ENCODE measurements at regions of chr1 and their contacts with region 1.

Region 1: DNA sequence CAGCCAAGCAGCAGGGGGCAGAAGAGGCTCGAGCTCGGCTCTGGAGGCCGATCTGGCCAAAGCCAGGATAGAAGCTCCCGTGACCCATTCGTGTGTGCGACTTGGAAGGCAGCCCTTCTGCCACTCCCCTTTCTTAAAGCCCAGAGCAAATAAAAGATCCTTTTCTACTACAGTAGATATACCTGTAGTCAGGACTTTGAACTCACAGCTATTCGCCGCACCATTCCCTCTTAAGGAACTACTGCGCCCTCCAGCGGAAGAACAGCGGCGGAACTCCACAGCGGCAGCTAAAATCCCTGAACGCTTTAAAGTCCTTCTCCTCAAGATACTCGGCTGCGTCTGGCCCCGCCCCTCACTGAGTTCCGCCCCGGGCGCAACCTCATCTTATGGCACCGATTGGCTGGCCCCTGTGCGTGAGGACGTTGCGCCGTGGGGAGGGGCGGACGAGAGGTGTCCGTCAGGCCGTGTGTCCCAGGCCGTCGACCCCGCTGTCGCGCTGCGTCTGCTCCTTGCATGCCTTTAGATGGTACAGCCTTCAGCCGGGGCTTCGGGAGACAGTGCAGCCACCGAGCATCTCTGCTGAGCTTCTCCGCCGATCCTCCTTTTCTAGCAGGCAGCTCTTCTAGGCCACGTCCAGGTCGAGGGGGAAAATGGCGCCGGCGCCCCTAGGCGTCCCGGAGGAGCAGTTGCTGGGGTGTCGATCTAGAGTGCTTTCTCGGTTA is at the start of gene LRIG2:
- DNase-seq: peak; percentile 100
- ATAC-seq: peak; percentile 96
- H3K4me3 Mint-ChIP-seq: peak within 1 kb of the TSS; percentile 98
- H3K27ac Mint-ChIP-seq: peak within 1 kb of the TSS; percentile 97
- H3K4me1 Mint-ChIP-seq: peaks cover 31% of the 10 kb centered on the region
- H3K27me3 Mint-ChIP-seq: no peaks in the 10 kb centered on the region
- CTCF ChIP-seq: peak; percentile 75
- total RNA-seq, gene LRIG2: 22.5 to 23.5 TPM (median 22.9 TPM) in 3 replicates

Region 2: DNA sequence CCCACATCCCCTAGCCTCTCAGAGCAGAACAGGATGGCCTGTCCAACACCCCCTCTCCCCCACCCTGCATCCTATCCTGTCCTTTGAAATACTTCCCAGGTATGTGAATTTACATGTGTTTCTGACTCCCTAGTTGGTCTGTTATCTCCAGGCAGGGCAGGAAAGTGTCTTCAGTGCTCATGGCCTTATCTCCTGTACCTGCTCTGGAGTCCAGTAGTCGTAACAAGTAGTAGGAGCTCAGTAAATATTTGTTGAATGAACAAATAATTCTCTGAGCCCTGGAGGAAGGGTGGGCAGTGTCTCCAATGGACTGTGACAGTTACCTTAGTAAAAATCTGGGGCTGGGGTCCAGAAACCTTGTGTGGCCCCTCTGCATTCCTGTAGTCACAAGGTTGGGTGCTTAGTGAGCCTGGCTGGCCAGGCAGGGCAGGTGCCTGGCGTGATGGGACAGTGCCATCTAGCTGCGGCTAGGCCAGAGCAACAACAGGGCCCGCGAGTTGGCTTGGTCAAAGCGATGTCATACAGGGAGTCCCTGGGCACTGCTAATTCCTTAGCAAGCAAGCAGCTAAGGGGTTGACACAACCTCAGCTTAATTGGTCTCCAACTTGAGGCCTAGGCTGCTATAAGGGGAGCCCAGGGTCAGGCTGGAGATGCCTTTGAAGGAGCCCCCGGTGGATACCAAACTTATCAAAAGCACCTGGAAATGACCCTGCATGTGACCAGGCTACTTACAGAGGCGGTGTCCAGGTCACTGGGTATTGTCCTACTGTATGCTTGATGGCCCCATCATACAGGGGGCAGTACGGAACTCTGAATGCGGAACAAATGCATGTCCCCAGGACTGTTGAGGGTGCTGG is 268.8 kb before region 1 on chr1:
- CTCF ChIA-PET with region 1: interaction called, 44 read pairs
- POLR2A ChIA-PET with region 1: no interaction called
- DNase-seq: peak; percentile 85
- ATAC-seq: peak; percentile 93
- H3K4me3 Mint-ChIP-seq: no peak overlapping the region
- H3K27ac Mint-ChIP-seq: no peak overlapping the region; the same call in 1 of the 2 replicates
- H3K4me1 Mint-ChIP-seq: peaks cover 49% of the 10 kb centered on the region
- H3K27me3 Mint-ChIP-seq: peaks cover 29% of the 10 kb centered on the region
- CTCF ChIP-seq: peak; percentile 50

Region 3: GRCh38 chr1:112882271-112882744 is 190.6 kb before region 1 on chr1:
- CTCF ChIA-PET with region 1: interaction called, 63 read pairs
- POLR2A ChIA-PET with region 1: interaction called, 4 read pairs
- DNase-seq: no peak
- ATAC-seq: no peak
- H3K4me3 Mint-ChIP-seq: no peak overlapping the region
- H3K27ac Mint-ChIP-seq: no peak overlapping the region
- H3K4me1 Mint-ChIP-seq: peaks cover 53% of the 10 kb centered on the region
- H3K27me3 Mint-ChIP-seq: no peaks in the 10 kb centered on the region
- CTCF ChIP-seq: no peak

Region 4: DNA sequence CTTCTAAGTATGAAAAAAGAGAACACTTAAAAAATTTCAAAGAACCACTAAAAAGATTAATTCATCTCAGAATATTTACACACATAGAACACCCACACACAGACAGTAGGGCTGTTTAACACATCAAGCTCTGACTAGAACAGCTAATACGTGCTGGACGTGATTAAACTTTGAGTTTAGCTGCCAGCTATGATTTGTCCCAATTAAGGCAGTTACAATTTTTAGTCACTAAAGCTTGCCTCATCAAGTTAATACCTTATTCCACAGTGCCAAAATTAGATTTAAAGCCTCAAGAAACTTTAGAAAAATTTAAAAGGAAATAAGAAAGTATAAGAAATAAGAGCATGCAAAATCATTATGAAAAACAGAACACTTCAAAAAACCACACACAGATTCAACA is 135.8 kb before region 1 on chr1:
- CTCF ChIA-PET with region 1: interaction called, 10 read pairs
- POLR2A ChIA-PET with region 1: no interaction called
- DNase-seq: no peak
- ATAC-seq: no peak
- H3K4me3 Mint-ChIP-seq: 0 out of 2 replicates have a peak overlapping the region, but pooled peaks have one; percentile 29
- H3K27ac Mint-ChIP-seq: peak overlapping the region; percentile 86
- H3K4me1 Mint-ChIP-seq: peaks cover 66% of the 10 kb centered on the region
- H3K27me3 Mint-ChIP-seq: no peaks in the 10 kb centered on the region
- CTCF ChIP-seq: no peak

Region 5: DNA sequence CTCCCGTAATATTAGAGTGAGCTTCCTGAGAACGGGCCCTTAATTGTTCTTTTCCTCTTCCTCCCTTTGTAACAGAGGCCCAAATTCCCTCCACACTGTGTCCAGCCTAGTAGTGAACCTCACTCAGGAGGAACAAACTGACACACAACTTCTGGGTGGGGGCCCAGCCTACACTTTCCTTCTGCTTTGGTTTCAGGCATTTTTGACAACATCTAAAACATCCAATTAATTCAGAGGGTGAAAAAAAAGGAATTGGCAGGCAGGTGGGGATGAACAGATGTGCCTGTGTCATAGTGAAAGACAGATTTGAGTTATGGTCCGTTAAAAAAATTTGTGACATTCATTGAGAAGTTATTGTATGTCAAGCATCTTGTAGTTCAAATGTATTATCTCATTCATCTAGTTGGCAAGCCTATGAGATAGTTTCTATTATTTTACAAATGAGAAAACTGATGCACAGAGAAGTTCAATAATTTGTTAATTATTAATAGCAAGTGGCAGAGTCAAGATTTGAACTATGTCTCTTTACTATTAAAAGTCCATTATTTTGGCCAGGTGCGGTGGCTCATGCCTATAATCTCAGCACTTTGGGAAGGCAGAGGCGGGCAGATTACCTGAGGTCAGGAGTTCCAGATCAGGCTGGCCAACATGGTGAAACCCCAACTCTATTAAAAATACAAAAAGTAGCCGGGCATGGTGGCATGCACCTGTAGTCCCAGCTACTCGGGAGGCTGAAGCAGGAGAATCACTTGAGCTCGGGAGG is 41.6 kb before region 1 on chr1:
- CTCF ChIA-PET with region 1: interaction called, 23 read pairs
- POLR2A ChIA-PET with region 1: interaction called, 6 read pairs
- DNase-seq: no peak
- ATAC-seq: no peak
- H3K4me3 Mint-ChIP-seq: no peak overlapping the region
- H3K27ac Mint-ChIP-seq: peak overlapping the region; percentile 40
- H3K4me1 Mint-ChIP-seq: peaks cover 50% of the 10 kb centered on the region
- H3K27me3 Mint-ChIP-seq: no peaks in the 10 kb centered on the region
- CTCF ChIP-seq: no peak

Region 6: DNA sequence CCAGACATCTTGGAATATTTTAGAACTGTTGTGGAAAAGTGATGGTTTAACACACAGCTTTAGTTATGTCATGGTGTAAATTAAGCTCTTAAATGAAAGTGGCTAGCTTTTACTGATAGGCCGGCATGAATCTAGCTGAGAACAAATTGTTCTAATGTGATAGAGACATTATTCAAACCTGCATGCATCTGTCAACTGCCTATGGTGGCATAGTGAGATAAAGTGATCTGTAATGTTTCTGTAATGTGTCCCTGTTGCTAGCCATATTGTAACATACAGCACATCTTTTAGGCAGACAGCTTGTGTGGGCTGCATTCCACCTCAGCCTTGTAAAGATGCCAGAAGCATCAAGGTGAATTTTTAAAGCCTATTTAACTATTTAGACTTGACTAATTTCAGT is 16.1 kb after region 1 on chr1:
- CTCF ChIA-PET with region 1: interaction called, 16 read pairs
- POLR2A ChIA-PET with region 1: no interaction called
- DNase-seq: no peak
- ATAC-seq: no peak
- H3K4me3 Mint-ChIP-seq: no peak overlapping the region
- H3K27ac Mint-ChIP-seq: no peak overlapping the region
- H3K4me1 Mint-ChIP-seq: no peaks in the 10 kb centered on the region
- H3K27me3 Mint-ChIP-seq: no peaks in the 10 kb centered on the region
- CTCF ChIP-seq: no peak

Region 7: DNA sequence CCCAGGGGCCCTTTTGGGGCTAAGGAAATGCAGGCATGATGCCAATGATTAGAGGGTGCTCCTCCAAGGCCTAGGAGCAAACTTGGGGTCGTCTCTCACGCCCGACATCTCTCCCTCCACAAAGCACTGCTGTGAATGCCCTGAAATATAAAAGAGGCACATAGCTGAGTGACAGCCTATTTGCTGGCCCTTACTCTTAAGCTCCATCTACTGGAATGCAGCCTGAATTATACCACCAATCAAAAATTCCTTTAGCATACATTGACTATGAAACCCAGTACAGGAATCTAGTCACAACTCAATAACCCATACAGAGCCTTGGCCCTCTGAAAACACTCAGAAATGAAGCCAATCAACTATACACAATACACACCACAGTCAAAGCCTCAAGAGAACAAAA is 105.6 kb after region 1 on chr1:
- CTCF ChIA-PET with region 1: no interaction called
- POLR2A ChIA-PET with region 1: no interaction called
- DNase-seq: no peak
- ATAC-seq: no peak
- H3K4me3 Mint-ChIP-seq: no peak overlapping the region
- H3K27ac Mint-ChIP-seq: no peak overlapping the region
- H3K4me1 Mint-ChIP-seq: no peaks in the 10 kb centered on the region
- H3K27me3 Mint-ChIP-seq: 0 out of 2 replicates have a peak, but pooled peaks cover 3% of the 10 kb centered on the region
- CTCF ChIP-seq: no peak

Measured in WTC11 (cell line).